Heart right ventricle (tissue), 16 donors: ENCODE measurements at regions of chr13 and their contacts with region 1.

Region 1: GRCh38 chr13:33228648-33229445 is 56.7 kb downstream of the STARD13 start:
- DNase-seq: no peak
- ATAC-seq: peak in 6 of 8 donors; percentile 43 to 67 (median 52)
- H3K4me3 ChIP-seq: peak overlapping the region in 1 of 10 donors; percentile 5
- H3K27ac ChIP-seq: peak overlapping the region; percentile 28 to 82 (median 73)
- H3K4me1 ChIP-seq: peaks cover 2 to 76% (median 61%) of the 10 kb centered on the region in 9 donors
- H3K27me3 ChIP-seq: no peaks in the 10 kb centered on the region
- CTCF ChIP-seq: peak; percentile 88 to 94 (median 90)

Region 2: DNA sequence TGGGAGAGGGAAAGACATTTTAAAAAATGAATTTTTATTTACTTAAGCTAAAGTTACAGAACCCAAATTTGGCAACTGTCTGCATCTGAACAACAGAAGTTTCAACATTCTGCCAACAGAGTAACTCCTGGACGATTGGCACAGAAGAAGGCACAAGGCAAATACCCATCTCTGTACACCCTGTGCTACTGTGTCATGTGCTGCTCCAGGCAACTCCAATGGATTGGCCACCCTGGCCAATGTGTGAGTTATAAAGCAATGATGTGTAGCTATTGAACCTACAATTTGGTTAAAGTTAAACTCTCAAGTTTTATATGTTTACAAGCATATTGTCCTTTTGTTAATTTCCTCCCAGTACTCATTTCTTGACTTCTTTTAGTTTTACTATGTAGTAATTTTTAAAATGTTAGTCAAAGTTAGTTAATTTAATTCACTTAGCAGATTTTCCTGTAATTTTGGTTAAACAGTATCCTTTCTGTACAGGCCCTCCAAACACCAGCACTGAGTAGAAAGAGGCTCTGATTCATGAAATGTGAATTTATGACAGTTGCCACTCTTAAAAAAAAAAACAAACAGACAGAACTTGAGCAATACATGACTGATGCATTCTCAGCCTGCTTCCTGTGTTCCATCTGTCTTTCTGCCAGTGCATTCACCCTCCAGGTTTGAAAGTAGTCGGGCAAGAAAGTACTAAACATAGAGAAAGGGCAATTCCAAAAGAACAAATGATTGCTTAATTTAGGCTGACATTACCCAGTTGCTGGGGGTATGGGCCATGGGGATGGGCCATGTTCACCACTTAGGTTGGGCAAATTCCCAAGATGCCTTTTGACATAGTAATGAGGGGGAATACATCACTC is 50.8 kb after region 1 on chr13:
- intact Hi-C with region 1: loop called in 6 of 10 experiments (anchors 2 to 10 kb)
- DNase-seq: no peak
- ATAC-seq: peak in 4 of 8 donors; percentile 38 to 85 (median 53)
- H3K4me3 ChIP-seq: no peak overlapping the region
- H3K27ac ChIP-seq: peak overlapping the region; percentile 29 to 83 (median 64)
- H3K4me1 ChIP-seq: peaks cover 15 to 98% (median 86%) of the 10 kb centered on the region in 9 donors
- H3K27me3 ChIP-seq: no peaks in the 10 kb centered on the region
- CTCF ChIP-seq: no peak

Region 3: GRCh38 chr13:33312150-33312860 is 83.5 kb after region 1 on chr13:
- intact Hi-C with region 1: loop called in 1 of 10 experiments (anchors 5 kb)
- DNase-seq: no peak
- ATAC-seq: peak in 5 of 8 donors; percentile 46 to 75 (median 58)
- H3K4me3 ChIP-seq: no peak overlapping the region
- H3K27ac ChIP-seq: no peak overlapping the region
- H3K4me1 ChIP-seq: peaks cover 0 to 29% (median 9%) of the 10 kb centered on the region in 9 donors
- H3K27me3 ChIP-seq: no peaks in the 10 kb centered on the region
- CTCF ChIP-seq: peak in 8 of 9 donors; percentile 25 to 62 (median 46)

Region 4: GRCh38 chr13:33487575-33488243 is 258.9 kb after region 1 on chr13:
- intact Hi-C with region 1: loop called in 2 of 10 experiments (anchors 5 kb)
- DNase-seq: peak in 1 of 2 donors; percentile 19
- ATAC-seq: peak; percentile 71 to 93 (median 83)
- H3K4me3 ChIP-seq: peak overlapping the region in 5 of 10 donors; percentile 18 to 34 (median 25)
- H3K27ac ChIP-seq: peak overlapping the region in 7 of 10 donors; percentile 3 to 46 (median 20)
- H3K4me1 ChIP-seq: peaks cover 0 to 20% (median 5%) of the 10 kb centered on the region in 9 donors
- H3K27me3 ChIP-seq: no peaks in the 10 kb centered on the region
- CTCF ChIP-seq: peak in 7 of 9 donors; percentile 34 to 61 (median 50)

Region 5: DNA sequence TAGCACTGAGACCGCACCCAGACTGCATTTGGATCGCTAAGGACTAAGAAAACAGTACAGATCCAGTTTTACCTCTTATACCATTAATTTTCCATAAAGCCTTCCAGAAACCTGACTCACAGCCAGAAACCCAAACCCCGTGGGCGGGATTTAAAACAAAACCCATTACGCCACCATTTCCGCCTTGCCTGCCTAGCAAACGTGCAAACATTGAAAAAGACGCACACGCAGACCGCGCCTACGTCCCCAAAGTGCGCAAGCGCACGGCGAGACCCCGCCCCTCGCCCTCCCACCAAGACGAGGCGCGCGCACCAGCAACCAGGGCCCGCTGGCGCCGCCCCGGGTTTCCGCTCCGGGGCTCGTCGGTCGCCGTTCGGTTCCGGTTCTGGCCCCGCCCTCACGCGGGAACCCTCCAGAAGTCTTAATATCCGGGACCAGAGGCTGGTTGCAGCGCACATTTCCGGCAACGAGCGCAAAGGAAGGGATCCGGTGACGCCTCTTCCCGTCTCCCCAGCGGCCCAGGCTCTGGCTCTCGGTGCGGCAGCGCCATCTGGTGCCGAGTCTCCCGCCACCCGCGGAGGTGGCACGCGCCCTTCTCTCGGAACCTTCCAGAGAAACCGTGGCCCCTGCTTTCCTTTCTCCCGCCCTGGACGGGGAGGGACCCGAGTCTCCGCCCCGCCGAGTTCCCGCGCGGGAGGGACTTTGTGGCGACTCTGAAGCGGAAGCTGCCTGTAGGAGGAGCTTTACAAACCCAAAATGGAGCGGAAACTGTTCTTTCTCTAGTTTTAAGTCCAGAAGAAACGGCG is 313.6 kb after region 1 on chr13:
- intact Hi-C with region 1: loop called in 9 of 10 experiments (anchors 1 to 10 kb)
- DNase-seq: peak; percentile 98 to 99
- ATAC-seq: peak; percentile 94 to 98 (median 96)
- H3K4me3 ChIP-seq: peak overlapping the region; percentile 11 to 62 (median 52)
- H3K27ac ChIP-seq: peak overlapping the region; percentile 92 to 99 (median 96)
- H3K4me1 ChIP-seq: peaks cover 2 to 45% (median 33%) of the 10 kb centered on the region in 9 donors
- H3K27me3 ChIP-seq: no peaks in the 10 kb centered on the region
- CTCF ChIP-seq: peak; percentile 75 to 97 (median 92)